Activated B cell treated with CpG ODN at 0.5 μM for 24 hours (primary cell): ENCODE measurements at regions of chr3 and their contacts with region 1.

Region 1: GRCh38 chr3:8416965-8417364 is 84.7 kb upstream of the LMCD1 start:
- DNase-seq: no peak
- ATAC-seq: no peak
- H3K4me3 Mint-ChIP-seq: no peak overlapping the region
- H3K27ac Mint-ChIP-seq: no peak overlapping the region
- H3K4me1 Mint-ChIP-seq: peaks cover 2% of the 10 kb centered on the region
- H3K27me3 Mint-ChIP-seq: no peaks in the 10 kb centered on the region
- CTCF ChIP-seq: no peak

Region 2: GRCh38 chr3:8239718-8240695 is 177.0 kb before region 1 on chr3:
- CTCF ChIA-PET with region 1: interaction called, 5 read pairs
- POLR2A ChIA-PET with region 1: no interaction called
- intact Hi-C with region 1: loop called (anchors 1 kb)
- DNase-seq: no peak
- ATAC-seq: peak; percentile 40
- H3K4me3 Mint-ChIP-seq: no peak overlapping the region
- H3K27ac Mint-ChIP-seq: no peak overlapping the region
- H3K4me1 Mint-ChIP-seq: no peaks in the 10 kb centered on the region
- H3K27me3 Mint-ChIP-seq: no peaks in the 10 kb centered on the region
- CTCF ChIP-seq: no peak

Region 3: GRCh38 chr3:8324740-8325139 is 92.2 kb before region 1 on chr3:
- CTCF ChIA-PET with region 1: interaction called, 33 read pairs
- POLR2A ChIA-PET with region 1: no interaction called
- intact Hi-C with region 1: loop called (anchors 1 kb)
- DNase-seq: no peak
- ATAC-seq: no peak
- H3K4me3 Mint-ChIP-seq: no peak overlapping the region
- H3K27ac Mint-ChIP-seq: no peak overlapping the region
- H3K4me1 Mint-ChIP-seq: peaks cover 11% of the 10 kb centered on the region
- H3K27me3 Mint-ChIP-seq: no peaks in the 10 kb centered on the region
- CTCF ChIP-seq: no peak

Region 4: DNA sequence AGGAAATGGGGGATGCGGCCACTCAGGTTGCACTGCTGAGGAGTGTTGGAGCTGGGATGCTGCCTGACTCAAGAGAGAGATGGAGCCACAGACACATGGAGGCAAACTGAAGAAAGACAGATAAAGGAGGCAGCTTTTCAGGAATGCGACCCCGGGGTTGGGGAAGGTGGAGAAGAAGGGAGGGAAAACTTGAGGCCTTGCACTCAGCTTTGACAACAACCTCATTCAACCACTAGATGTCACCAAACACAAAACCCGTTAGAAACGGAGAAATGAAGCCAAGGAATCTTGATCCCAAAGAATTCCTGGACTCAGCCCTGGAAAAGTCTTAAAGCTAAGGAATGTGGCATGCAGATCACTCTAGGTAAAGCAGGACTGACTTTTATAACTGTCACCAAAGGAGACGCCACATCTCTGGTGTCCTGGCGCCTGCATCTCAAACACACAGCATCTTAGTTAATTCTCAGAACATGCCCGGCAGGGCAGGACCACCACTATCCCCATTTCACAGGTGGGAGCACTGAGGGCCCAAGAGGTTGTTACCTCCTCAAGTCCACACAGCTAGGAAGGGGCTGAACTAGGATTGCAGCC is 25.1 kb after region 1 on chr3:
- CTCF ChIA-PET with region 1: no interaction called
- POLR2A ChIA-PET with region 1: no interaction called
- intact Hi-C with region 1: no loop called
- DNase-seq: no peak
- ATAC-seq: no peak
- H3K4me3 Mint-ChIP-seq: no peak overlapping the region
- H3K27ac Mint-ChIP-seq: no peak overlapping the region
- H3K4me1 Mint-ChIP-seq: no peaks in the 10 kb centered on the region
- H3K27me3 Mint-ChIP-seq: peaks cover 1% of the 10 kb centered on the region
- CTCF ChIP-seq: no peak